H1 (cell line): ENCODE measurements at regions of chr9 and their contacts with region 1.

Region 1: GRCh38 chr9:124210697-124211096 is 47.1 kb upstream of the NEK6 start:
- DNase-seq: no peak
- H3K4me3 ChIP-seq: no peak overlapping the region
- H3K27ac ChIP-seq: no peak overlapping the region
- H3K4me1 ChIP-seq: peaks cover 0 to 4% (median 2%) of the 10 kb centered on the region in 4 experiments; a peak in 4 of 7 replicates
- H3K27me3 ChIP-seq: no peaks in the 10 kb centered on the region
- CTCF ChIP-seq: no peak
- EP300 ChIP-seq: no peak
- POLR2A ChIP-seq: no peak
- RAD21 ChIP-seq: no peak

Region 2: GRCh38 chr9:124164811-124165210 is 45.9 kb before region 1 on chr9:
- CTCF ChIA-PET with region 1: no interaction called
- POLR2A ChIA-PET with region 1: no interaction called
- DNase-seq: no peak
- H3K4me3 ChIP-seq: no peak overlapping the region
- H3K27ac ChIP-seq: no peak overlapping the region
- H3K4me1 ChIP-seq: no peaks in the 10 kb centered on the region
- H3K27me3 ChIP-seq: no peaks in the 10 kb centered on the region
- CTCF ChIP-seq: no peak
- EP300 ChIP-seq: no peak
- POLR2A ChIP-seq: no peak
- RAD21 ChIP-seq: no peak

Region 3: GRCh38 chr9:124222918-124223720 is 12.4 kb after region 1 on chr9:
- CTCF ChIA-PET with region 1: interaction called, 12 read pairs
- POLR2A ChIA-PET with region 1: interaction called, 3 read pairs
- DNase-seq: no peak
- H3K4me3 ChIP-seq: no peak overlapping the region
- H3K27ac ChIP-seq: no peak overlapping the region
- H3K4me1 ChIP-seq: no peaks in the 10 kb centered on the region
- H3K27me3 ChIP-seq: no peaks in the 10 kb centered on the region
- CTCF ChIP-seq: no peak
- EP300 ChIP-seq: no peak
- POLR2A ChIP-seq: no peak
- RAD21 ChIP-seq: no peak

Region 4: GRCh38 chr9:124267271-124267807 is 56.6 kb after region 1 on chr9:
- CTCF ChIA-PET with region 1: no interaction called
- POLR2A ChIA-PET with region 1: no interaction called
- DNase-seq: no peak
- H3K4me3 ChIP-seq: no peak overlapping the region
- H3K27ac ChIP-seq: no peak overlapping the region; the same call in 1 of the 2 replicates
- H3K4me1 ChIP-seq: peaks cover 5 to 12% (median 5%) of the 10 kb centered on the region in 4 experiments; a peak in 5 of 7 replicates
- H3K27me3 ChIP-seq: no peaks in the 10 kb centered on the region
- CTCF ChIP-seq: no peak
- EP300 ChIP-seq: no peak
- POLR2A ChIP-seq: no peak
- RAD21 ChIP-seq: no peak